Breast epithelium (tissue), 4 donors: ENCODE measurements at regions of chr10 and their contacts with region 1.

Region 1: DNA sequence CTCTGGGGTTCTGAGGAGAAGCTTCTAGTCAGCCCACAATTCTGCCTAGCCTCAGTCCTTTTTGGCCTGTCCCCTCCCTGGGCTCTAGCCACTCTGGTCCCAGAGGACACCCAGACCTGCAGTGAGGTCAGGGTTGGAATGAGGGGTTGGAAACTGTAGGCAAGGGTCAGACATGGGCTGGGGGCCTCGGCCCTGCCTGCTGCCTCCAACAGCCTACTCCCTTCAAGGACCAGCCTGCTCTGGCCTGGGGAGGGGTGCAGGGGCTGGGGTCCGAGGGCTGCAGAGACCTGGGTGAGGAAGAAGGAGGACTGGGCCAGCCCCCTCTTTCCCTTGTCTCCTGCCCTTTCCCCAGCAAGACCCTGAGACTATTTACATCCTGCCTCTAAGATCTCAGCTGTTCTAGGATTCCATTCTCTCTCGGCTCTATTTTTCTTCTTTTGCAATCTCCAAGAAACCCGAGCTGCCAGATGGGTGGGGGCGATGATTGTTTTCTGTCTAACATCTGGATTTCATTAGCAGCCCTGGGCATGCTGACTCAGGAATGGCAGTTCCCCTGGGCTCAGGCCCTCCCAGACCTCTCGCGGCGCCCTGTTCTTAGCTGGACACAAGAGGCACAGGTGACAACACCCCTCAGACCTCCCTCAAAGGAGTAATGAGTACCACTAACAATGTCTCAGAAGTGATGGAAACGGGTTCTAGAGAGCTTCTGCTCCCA is 23.1 kb downstream of the ZCCHC24 start:
- DNase-seq: no peak
- H3K4me3 ChIP-seq: no peak overlapping the region
- H3K27ac ChIP-seq: peak overlapping the region; percentile 58 to 92
- H3K4me1 ChIP-seq: peaks cover 11 to 17% of the 10 kb centered on the region in 2 donors
- H3K27me3 ChIP-seq: no peaks in the 10 kb centered on the region
- CTCF ChIP-seq: no peak
- POLR2A ChIP-seq: no peak

Region 2: GRCh38 chr10:79608505-79609375 is 186.4 kb after region 1 on chr10:
- intact Hi-C with region 1: no loop called
- DNase-seq: no peak
- H3K4me3 ChIP-seq: no peak overlapping the region
- H3K27ac ChIP-seq: no peak overlapping the region
- H3K4me1 ChIP-seq: no peaks in the 10 kb centered on the region
- H3K27me3 ChIP-seq: no peaks in the 10 kb centered on the region
- CTCF ChIP-seq: peak in 1 of 3 donors; percentile 32
- POLR2A ChIP-seq: no peak

Region 3: GRCh38 chr10:80382989-80383388 is 960.7 kb after region 1 on chr10:
- intact Hi-C with region 1: loop called (anchors 5 kb)
- DNase-seq: no peak
- H3K4me3 ChIP-seq: no peak overlapping the region
- H3K27ac ChIP-seq: no peak overlapping the region
- H3K4me1 ChIP-seq: no peaks in the 10 kb centered on the region
- H3K27me3 ChIP-seq: no peaks in the 10 kb centered on the region
- CTCF ChIP-seq: peak in 2 of 3 donors; percentile 53 to 70
- POLR2A ChIP-seq: no peak